CD8-positive, alpha-beta T cell (primary cell): ENCODE measurements at regions of chr15 and their contacts with region 1.

Region 1: DNA sequence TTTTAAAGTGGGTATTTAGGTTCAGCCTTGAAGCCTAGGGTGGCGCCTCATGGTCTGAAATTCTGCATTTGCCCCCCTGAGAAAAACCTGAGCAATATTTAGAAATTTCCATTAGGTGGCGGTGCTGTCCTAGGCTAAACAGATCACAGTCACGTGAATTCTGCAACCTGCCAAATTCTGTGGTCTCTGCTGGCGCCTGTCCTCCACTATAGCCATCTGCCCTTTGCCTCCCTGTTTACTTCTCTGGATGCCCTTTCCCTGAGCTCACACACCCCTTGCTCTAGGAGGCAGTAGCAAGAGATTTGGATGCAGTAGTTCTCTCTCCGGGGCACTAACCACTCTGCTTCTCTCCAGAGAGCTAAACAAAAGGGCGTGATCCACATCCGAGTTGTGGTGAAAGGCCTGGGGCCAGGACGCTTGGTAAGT is 9.1 kb downstream of the MRPS11 start:
- DNase-seq: peak in 3 of 9 experiments; percentile 8 to 44 (median 31)
- ATAC-seq: peak; percentile 49
- H3K4me3 ChIP-seq: no peak overlapping the region
- H3K4me3 Mint-ChIP-seq: no peak overlapping the region
- H3K27ac ChIP-seq: no peak overlapping the region
- H3K27ac Mint-ChIP-seq: no peak overlapping the region
- H3K4me1 ChIP-seq: no peaks in the 10 kb centered on the region
- H3K4me1 Mint-ChIP-seq: no peaks in the 10 kb centered on the region
- H3K27me3 ChIP-seq: no peaks in the 10 kb centered on the region
- H3K27me3 Mint-ChIP-seq: no peaks in the 10 kb centered on the region
- CTCF ChIP-seq: peak; percentile 35

Region 2: GRCh38 chr15:88440021-88440420 is 36.6 kb before region 1 on chr15:
- CTCF ChIA-PET with region 1: no interaction called
- POLR2A ChIA-PET with region 1: no interaction called
- intact Hi-C with region 1: no loop called
- DNase-seq: no peak
- ATAC-seq: no peak
- H3K4me3 ChIP-seq: no peak overlapping the region
- H3K4me3 Mint-ChIP-seq: no peak overlapping the region
- H3K27ac ChIP-seq: no peak overlapping the region
- H3K27ac Mint-ChIP-seq: no peak overlapping the region
- H3K4me1 ChIP-seq: no peaks in the 10 kb centered on the region
- H3K4me1 Mint-ChIP-seq: no peaks in the 10 kb centered on the region
- H3K27me3 ChIP-seq: peaks cover 0 to 2% of the 10 kb centered on the region in 2 experiments
- H3K27me3 Mint-ChIP-seq: peaks cover 36% of the 10 kb centered on the region
- CTCF ChIP-seq: no peak

Region 3: GRCh38 chr15:88664151-88664778 is 187.6 kb after region 1 on chr15:
- CTCF ChIA-PET with region 1: interaction called, 12 read pairs
- POLR2A ChIA-PET with region 1: interaction called, 3 read pairs
- intact Hi-C with region 1: loop called (anchors 1 kb)
- DNase-seq: peak in 7 of 9 experiments; percentile 29 to 80 (median 66)
- ATAC-seq: peak; percentile 91
- H3K4me3 ChIP-seq: no peak overlapping the region
- H3K4me3 Mint-ChIP-seq: no peak overlapping the region
- H3K27ac ChIP-seq: no peak overlapping the region
- H3K27ac Mint-ChIP-seq: peak overlapping the region; percentile 15
- H3K4me1 ChIP-seq: peaks cover 35% of the 10 kb centered on the region
- H3K4me1 Mint-ChIP-seq: peaks cover 32% of the 10 kb centered on the region
- H3K27me3 ChIP-seq: no peaks in the 10 kb centered on the region
- H3K27me3 Mint-ChIP-seq: peaks cover 6% of the 10 kb centered on the region
- CTCF ChIP-seq: peak; percentile 63

Region 4: GRCh38 chr15:88834211-88834812 is 357.7 kb after region 1 on chr15:
- CTCF ChIA-PET with region 1: no interaction called
- POLR2A ChIA-PET with region 1: no interaction called
- intact Hi-C with region 1: loop called in 1 of 2 experiments (anchors 10 kb)
- DNase-seq: peak in 6 of 9 experiments; percentile 4 to 55 (median 38)
- ATAC-seq: no peak
- H3K4me3 ChIP-seq: no peak overlapping the region
- H3K4me3 Mint-ChIP-seq: no peak overlapping the region
- H3K27ac ChIP-seq: no peak overlapping the region
- H3K27ac Mint-ChIP-seq: no peak overlapping the region
- H3K4me1 ChIP-seq: no peaks in the 10 kb centered on the region
- H3K4me1 Mint-ChIP-seq: no peaks in the 10 kb centered on the region
- H3K27me3 ChIP-seq: no peaks in the 10 kb centered on the region
- H3K27me3 Mint-ChIP-seq: peaks cover 8% of the 10 kb centered on the region
- CTCF ChIP-seq: no peak

Region 5: DNA sequence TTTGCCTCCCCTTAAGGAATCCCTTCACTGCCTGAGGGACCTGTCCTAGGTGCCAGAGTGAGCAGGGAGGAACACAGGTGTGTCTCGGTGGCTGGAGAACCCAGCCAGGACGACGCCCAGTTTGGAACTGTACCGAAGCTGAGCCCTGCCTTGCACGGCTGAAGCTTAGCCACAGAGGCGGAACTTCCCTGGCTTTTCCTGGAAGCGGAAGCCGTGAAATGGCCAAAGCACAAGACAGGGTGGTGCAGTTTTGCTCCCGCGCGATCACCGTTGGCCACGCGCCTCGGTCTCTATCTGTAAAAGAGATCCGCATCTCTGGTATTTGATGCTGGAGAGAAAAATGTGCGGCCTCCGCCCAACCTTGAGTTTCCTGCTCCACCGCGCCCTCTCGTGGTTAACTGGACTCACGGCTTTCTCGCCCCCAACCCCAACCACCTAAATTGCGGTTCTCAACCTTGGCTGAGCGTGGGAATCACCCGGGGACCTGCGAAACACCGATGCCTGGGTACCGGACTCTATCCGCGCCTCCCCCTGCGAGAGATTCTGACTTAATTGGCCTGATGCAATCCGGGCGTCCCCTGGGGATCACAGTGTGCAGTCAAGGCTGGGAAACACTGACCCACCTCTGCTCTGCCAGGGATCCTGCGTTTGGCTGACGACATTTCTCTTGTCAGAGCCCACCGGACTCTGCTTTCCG is 540.9 kb after region 1 on chr15:
- CTCF ChIA-PET with region 1: no interaction called
- POLR2A ChIA-PET with region 1: no interaction called
- intact Hi-C with region 1: loop called in 1 of 2 experiments (anchors 5 kb)
- DNase-seq: peak; percentile 71 to 92 (median 86)
- ATAC-seq: peak; percentile 96
- H3K4me3 ChIP-seq: peak overlapping the region; percentile 19 to 22
- H3K4me3 Mint-ChIP-seq: peak overlapping the region; percentile 68
- H3K27ac ChIP-seq: no peak overlapping the region
- H3K27ac Mint-ChIP-seq: peak overlapping the region; percentile 18
- H3K4me1 ChIP-seq: peaks cover 9% of the 10 kb centered on the region
- H3K4me1 Mint-ChIP-seq: peaks cover 12% of the 10 kb centered on the region
- H3K27me3 ChIP-seq: no peaks in the 10 kb centered on the region
- H3K27me3 Mint-ChIP-seq: peaks cover 5% of the 10 kb centered on the region
- CTCF ChIP-seq: peak; percentile 58

Region 6: GRCh38 chr15:89197503-89197971 is 720.9 kb after region 1 on chr15:
- CTCF ChIA-PET with region 1: no interaction called
- POLR2A ChIA-PET with region 1: no interaction called
- intact Hi-C with region 1: no loop called
- DNase-seq: no peak
- ATAC-seq: no peak
- H3K4me3 ChIP-seq: no peak overlapping the region
- H3K4me3 Mint-ChIP-seq: no peak overlapping the region
- H3K27ac ChIP-seq: no peak overlapping the region
- H3K27ac Mint-ChIP-seq: peak overlapping the region; percentile 14
- H3K4me1 ChIP-seq: no peaks in the 10 kb centered on the region
- H3K4me1 Mint-ChIP-seq: peaks cover 5% of the 10 kb centered on the region
- H3K27me3 ChIP-seq: no peaks in the 10 kb centered on the region
- H3K27me3 Mint-ChIP-seq: no peaks in the 10 kb centered on the region
- CTCF ChIP-seq: no peak